Posterior vena cava (tissue), 2 donors: ENCODE measurements at regions of chr12 and their contacts with region 1.

Region 1: DNA sequence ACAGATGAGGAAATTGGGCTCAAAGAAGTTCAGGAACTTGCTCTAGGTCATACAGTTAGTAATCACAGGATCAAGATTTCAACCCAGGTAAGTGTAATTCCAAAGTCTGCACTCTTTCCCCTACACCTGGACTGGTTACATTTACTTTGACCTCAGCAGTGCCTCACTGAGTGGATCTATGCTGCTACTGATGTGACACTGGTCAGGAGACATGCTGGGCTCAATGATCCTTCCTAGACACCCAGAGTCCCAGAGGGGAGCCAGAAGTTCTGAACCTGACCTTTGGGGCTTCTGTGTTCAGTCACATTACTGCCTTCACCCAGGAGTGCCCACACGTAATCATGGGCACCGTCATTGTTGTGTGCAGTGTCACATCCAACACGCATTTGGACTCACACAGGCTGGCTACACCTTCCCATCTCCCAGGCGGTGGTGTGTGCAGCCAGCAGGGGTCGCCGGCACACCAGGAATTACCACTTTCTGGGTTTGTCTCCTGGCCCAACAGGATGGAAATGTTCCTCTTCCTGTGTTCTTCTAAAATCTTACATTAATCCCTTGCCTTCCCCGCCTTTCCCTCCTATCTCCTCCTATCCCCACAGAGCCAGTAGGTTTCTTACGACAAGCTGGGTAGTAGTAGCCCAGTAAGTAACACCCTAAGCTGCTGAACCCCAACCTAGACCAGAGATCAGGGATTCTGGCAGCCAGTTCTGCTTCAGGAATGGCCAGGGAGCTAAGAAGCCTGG is 25.6 kb downstream of the CALCOCO1 start:
- DNase-seq: peak; percentile 94

Region 2: DNA sequence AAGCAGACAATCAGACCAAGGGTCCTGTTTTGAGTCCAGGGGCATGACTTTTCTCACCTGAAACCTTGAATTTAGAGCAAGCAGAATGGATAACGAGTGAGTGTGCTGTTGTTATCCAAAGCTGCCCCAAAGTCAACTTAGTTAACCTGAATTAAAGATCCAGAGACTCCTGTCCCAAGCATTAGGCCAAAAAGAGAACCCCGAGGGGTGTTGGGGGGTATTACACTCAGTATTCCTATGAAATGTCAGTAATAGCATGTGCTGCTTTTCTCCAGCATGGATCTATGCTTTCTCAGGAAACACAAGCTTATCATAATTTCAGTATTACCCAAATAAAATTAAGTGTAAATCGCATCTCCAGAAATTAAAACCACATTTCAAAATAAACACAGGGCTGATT is 676.4 kb before region 1 on chr12:
- intact Hi-C with region 1: no loop called
- DNase-seq: no peak

Region 3: DNA sequence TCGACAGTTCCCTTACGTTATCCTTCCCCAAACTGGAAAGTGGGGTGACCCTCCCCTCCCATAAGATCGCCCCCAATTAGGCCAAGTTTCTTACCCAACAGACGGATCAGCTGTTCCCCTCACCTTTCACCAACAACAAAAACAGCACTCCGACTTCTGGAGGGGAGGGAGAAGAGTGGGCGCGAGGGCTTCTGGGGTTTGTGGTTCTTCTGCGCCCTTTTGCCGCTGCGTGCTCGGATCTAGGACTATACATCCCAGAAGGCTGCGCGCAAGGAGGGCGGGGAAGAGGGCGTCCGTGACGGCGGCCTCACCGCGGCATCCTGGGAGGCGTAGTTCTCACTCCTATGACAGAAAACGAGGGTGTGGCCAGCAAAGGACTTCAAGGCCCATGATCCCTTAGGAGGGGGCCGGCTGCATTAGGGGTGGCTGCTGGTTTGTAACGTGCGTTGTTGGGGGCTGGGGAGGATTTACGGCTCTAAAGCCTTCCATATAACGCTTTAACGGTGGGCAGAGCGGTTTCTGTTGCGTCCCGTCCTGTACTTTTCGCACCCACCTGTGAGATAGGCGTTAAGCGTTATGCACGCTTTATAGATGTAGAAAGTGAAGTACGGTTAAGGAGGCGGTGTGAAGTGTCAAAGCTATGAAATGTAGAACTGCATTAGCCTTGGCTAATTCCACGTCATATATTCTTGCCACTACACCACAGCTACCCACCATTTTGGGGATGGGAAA is 25.8 kb after region 1 on chr12 and contains the start of gene CALCOCO1:
- intact Hi-C with region 1: no loop called
- DNase-seq: peak; percentile 99
- total RNA-seq, gene CALCOCO1: 124 to 131 TPM

Region 4: GRCh38 chr12:53746592-53747092 is 45.0 kb after region 1 on chr12:
- intact Hi-C with region 1: loop called (anchors 2 kb)
- DNase-seq: peak; percentile 98